ENCODE measurements at regions of chr6 and their contacts with region 1.

Region 1: GRCh38 chr6:142784344-142784743 is 160.6 kb downstream of the HIVEP2 start:
- DNase-seq: peak; percentile 50
- H3K4me3 Mint-ChIP-seq: no peak overlapping the region
- H3K27ac Mint-ChIP-seq: peak overlapping the region; percentile 76
- H3K4me1 Mint-ChIP-seq: peaks cover 71% of the 10 kb centered on the region
- H3K27me3 Mint-ChIP-seq: no peaks in the 10 kb centered on the region

Region 2: GRCh38 chr6:142827369-142827768 is 43.0 kb after region 1 on chr6:
- CTCF ChIA-PET with region 1: no interaction called
- intact Hi-C with region 1: no loop called
- DNase-seq: no peak
- H3K4me3 Mint-ChIP-seq: no peak overlapping the region
- H3K27ac Mint-ChIP-seq: no peak overlapping the region
- H3K4me1 Mint-ChIP-seq: peaks cover 79% of the 10 kb centered on the region
- H3K27me3 Mint-ChIP-seq: no peaks in the 10 kb centered on the region

Region 3: GRCh38 chr6:143026696-143027449 is 242.5 kb after region 1 on chr6:
- CTCF ChIA-PET with region 1: no interaction called
- intact Hi-C with region 1: loop called (anchors 5 kb)
- DNase-seq: peak; percentile 76
- H3K4me3 Mint-ChIP-seq: no peak overlapping the region
- H3K27ac Mint-ChIP-seq: no peak overlapping the region
- H3K4me1 Mint-ChIP-seq: peaks cover 7% of the 10 kb centered on the region
- H3K27me3 Mint-ChIP-seq: no peaks in the 10 kb centered on the region

Region 4: GRCh38 chr6:143842902-143843676 is 1058.7 kb after region 1 on chr6 and contains the start of gene LTV1:
- CTCF ChIA-PET with region 1: no interaction called
- intact Hi-C with region 1: no loop called
- DNase-seq: peak; percentile 96
- H3K4me3 Mint-ChIP-seq: peak within 1 kb of the TSS; percentile 93
- H3K27ac Mint-ChIP-seq: peak within 1 kb of the TSS; percentile 94
- H3K4me1 Mint-ChIP-seq: peaks cover 28% of the 10 kb centered on the region
- H3K27me3 Mint-ChIP-seq: no peaks in the 10 kb centered on the region
- total RNA-seq, gene LTV1: 22.8 to 23.3 TPM

Region 5: GRCh38 chr6:144305985-144306384 is 1521.6 kb after region 1 on chr6:
- CTCF ChIA-PET with region 1: no interaction called
- intact Hi-C with region 1: no loop called
- DNase-seq: peak; percentile 39
- H3K4me3 Mint-ChIP-seq: no peak overlapping the region
- H3K27ac Mint-ChIP-seq: no peak overlapping the region
- H3K4me1 Mint-ChIP-seq: peaks cover 9% of the 10 kb centered on the region
- H3K27me3 Mint-ChIP-seq: peaks cover 2% of the 10 kb centered on the region

Measured in activated naive CD4-positive, alpha-beta T cell treated with anti-CD3 and anti-CD28 coated beads for 36 hours (primary cell).